ENCODE measurements at regions of chr10 and their contacts with region 1.

Region 1: DNA sequence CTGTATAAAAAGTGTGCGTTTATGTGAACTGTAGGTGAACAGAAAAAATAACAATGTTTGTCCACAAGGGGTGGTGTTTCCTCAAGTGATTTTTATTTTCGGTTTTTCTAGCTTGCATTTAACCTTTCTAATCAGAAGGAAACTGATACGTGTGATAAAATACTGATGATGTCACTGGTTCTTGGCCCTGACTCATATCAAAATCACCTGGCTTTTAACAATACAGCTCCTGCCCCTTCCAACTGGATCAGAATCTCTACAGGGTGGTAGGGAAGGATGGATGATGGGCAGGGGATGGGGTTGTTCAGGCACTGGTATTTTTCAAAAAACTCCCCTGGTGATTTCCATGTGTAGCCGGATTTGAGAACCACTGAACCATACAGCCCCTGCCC is 10.9 kb downstream of the NPFFR1 start:
- DNase-seq: no peak
- H3K4me3 Mint-ChIP-seq: no peak overlapping the region
- H3K27ac Mint-ChIP-seq: no peak overlapping the region
- H3K4me1 Mint-ChIP-seq: peaks cover 14% of the 10 kb centered on the region
- H3K27me3 Mint-ChIP-seq: no peaks in the 10 kb centered on the region
- CTCF ChIP-seq: peak; percentile 53

Region 2: GRCh38 chr10:70331486-70332268 is 58.8 kb after region 1 on chr10:
- CTCF ChIA-PET with region 1: interaction called, 5 read pairs
- intact Hi-C with region 1: loop called (anchors 5 kb)
- DNase-seq: peak; percentile 81
- H3K4me3 Mint-ChIP-seq: peak overlapping the region; percentile 13
- H3K27ac Mint-ChIP-seq: peak overlapping the region; percentile 72
- H3K4me1 Mint-ChIP-seq: peaks cover 41% of the 10 kb centered on the region
- H3K27me3 Mint-ChIP-seq: no peaks in the 10 kb centered on the region
- CTCF ChIP-seq: peak; percentile 23

Measured in Calu3 (cell line).